CD8-positive, alpha-beta T cell (primary cell): ENCODE measurements at regions of chr19 and their contacts with region 1.

Region 1: GRCh38 chr19:41563854-41564514 is 12.0 kb upstream of the CEACAM21 start:
- DNase-seq: peak in 6 of 9 experiments; percentile 42 to 84 (median 67)
- ATAC-seq: peak; percentile 64
- H3K4me3 ChIP-seq: peak overlapping the region; percentile 29 to 68
- H3K4me3 Mint-ChIP-seq: peak overlapping the region; percentile 71
- H3K27ac ChIP-seq: peak overlapping the region; percentile 34 to 51
- H3K27ac Mint-ChIP-seq: peak overlapping the region; percentile 60
- H3K4me1 ChIP-seq: peaks cover 68% of the 10 kb centered on the region
- H3K4me1 Mint-ChIP-seq: peaks cover 58% of the 10 kb centered on the region
- H3K27me3 ChIP-seq: no peaks in the 10 kb centered on the region
- H3K27me3 Mint-ChIP-seq: peaks cover 26% of the 10 kb centered on the region
- CTCF ChIP-seq: no peak

Region 2: DNA sequence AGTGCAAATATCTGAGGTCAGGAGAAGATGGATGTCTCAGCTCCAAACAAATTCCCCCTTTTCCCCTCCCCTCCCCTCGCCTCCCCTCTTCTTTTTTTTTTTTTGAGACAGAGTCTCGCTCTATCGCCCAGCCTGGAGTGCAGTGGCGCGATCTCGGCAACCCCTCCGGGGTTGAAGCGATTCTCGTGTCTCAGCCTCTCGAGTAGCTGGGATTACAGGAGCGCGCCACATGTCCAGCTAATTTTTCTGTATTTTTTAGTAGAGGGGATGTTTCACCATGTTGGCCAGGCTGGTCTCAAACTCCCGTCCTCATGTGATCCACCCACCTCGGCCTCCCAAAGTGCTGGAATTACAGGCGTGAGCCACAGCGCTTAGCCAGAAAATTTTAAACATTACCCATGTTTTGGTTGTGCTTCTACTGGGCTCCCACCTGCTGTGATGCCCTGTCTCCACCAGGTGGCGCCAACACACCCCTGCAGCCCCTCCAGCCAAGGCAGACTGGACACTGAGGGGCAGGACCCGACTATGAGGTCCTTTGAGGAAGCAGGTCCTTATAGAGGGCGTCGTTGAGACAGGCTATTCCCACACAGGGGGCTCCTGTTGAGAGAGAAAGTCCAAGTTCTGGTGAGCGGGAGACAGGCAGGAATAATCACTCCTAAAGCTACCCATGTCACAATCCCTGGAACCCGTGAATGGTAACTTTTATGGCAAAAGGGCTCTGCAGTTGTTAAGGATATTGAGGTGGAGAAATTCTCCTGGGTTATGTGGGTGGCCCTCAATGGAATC is 114.7 kb before region 1 on chr19:
- CTCF ChIA-PET with region 1: interaction called, 122 read pairs
- POLR2A ChIA-PET with region 1: no interaction called
- intact Hi-C with region 1: no loop called
- DNase-seq: peak; percentile 49 to 86 (median 71)
- ATAC-seq: peak; percentile 87
- H3K4me3 ChIP-seq: peak overlapping the region; percentile 23 to 37
- H3K4me3 Mint-ChIP-seq: peak overlapping the region; percentile 73
- H3K27ac ChIP-seq: no peak overlapping the region
- H3K27ac Mint-ChIP-seq: no peak overlapping the region
- H3K4me1 ChIP-seq: peaks cover 5% of the 10 kb centered on the region
- H3K4me1 Mint-ChIP-seq: peaks cover 5% of the 10 kb centered on the region
- H3K27me3 ChIP-seq: peaks cover 0 to 8% of the 10 kb centered on the region in 2 experiments
- H3K27me3 Mint-ChIP-seq: peaks cover 13% of the 10 kb centered on the region
- CTCF ChIP-seq: peak; percentile 99

Region 3: DNA sequence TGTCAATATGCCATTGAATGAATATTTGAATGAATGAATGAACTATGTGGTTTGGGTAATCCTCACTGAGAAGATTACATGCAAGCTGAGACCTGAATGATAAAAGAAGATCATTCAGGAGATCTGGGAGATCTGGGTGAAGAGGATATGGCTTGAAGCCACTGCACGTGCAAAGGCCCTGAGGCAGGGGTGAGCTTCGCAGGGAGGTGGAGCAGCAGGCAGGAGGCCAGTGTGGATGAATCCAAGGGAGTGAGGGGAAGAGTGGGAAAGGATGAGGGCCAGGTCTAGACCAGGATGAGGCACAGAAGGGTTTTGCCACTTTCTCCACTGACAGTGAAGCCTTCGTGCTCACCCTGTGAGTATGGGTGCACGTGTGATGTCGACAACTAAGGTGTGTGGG is 71.1 kb before region 1 on chr19:
- CTCF ChIA-PET with region 1: no interaction called
- POLR2A ChIA-PET with region 1: no interaction called
- intact Hi-C with region 1: no loop called
- DNase-seq: no peak
- ATAC-seq: no peak
- H3K4me3 ChIP-seq: no peak overlapping the region
- H3K4me3 Mint-ChIP-seq: no peak overlapping the region
- H3K27ac ChIP-seq: no peak overlapping the region
- H3K27ac Mint-ChIP-seq: no peak overlapping the region
- H3K4me1 ChIP-seq: no peaks in the 10 kb centered on the region
- H3K4me1 Mint-ChIP-seq: no peaks in the 10 kb centered on the region
- H3K27me3 ChIP-seq: no peaks in the 10 kb centered on the region
- H3K27me3 Mint-ChIP-seq: peaks cover 2% of the 10 kb centered on the region
- CTCF ChIP-seq: no peak

Region 4: DNA sequence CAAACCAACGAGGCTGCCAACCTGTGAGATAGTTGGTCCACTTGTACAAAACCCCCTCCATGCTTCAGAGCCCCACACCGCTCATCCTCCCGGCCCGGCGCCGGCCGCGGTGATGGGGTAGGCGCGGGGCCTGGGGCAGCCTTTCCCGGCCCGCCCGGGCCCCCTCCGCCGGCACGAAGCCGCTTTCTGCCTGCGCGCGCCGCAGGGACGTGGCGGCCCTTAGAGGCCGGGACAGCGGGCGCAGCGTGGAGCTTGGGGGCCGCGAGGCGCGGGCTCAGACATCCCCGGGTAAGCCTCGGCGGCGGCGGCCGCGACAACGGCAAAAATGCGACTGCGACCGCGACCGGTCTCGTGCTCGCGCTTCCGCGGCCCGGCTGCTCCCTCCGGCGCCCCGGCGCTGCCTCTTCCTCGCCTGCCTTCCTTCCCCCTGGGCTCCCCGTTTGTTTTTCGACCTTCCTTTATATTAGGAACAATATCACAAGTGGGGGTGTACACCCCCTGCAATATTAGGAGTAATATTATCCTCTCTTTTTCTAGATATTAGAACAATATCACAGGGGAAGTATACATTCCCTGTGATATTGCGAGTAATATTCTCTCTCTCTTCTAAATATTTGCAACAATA is 41.9 kb before region 1 on chr19:
- CTCF ChIA-PET with region 1: no interaction called
- POLR2A ChIA-PET with region 1: no interaction called
- intact Hi-C with region 1: loop called in 1 of 2 experiments (anchors 5 kb)
- DNase-seq: peak in 8 of 9 experiments; percentile 24 to 76 (median 53)
- ATAC-seq: peak; percentile 71
- H3K4me3 ChIP-seq: peak overlapping the region; percentile 39 to 43
- H3K4me3 Mint-ChIP-seq: peak overlapping the region; percentile 85
- H3K27ac ChIP-seq: peak overlapping the region; percentile 49 to 62
- H3K27ac Mint-ChIP-seq: peak overlapping the region; percentile 64
- H3K4me1 ChIP-seq: peaks cover 10% of the 10 kb centered on the region
- H3K4me1 Mint-ChIP-seq: peaks cover 19% of the 10 kb centered on the region
- H3K27me3 ChIP-seq: no peaks in the 10 kb centered on the region
- H3K27me3 Mint-ChIP-seq: peaks cover 52% of the 10 kb centered on the region
- CTCF ChIP-seq: no peak

Region 5: DNA sequence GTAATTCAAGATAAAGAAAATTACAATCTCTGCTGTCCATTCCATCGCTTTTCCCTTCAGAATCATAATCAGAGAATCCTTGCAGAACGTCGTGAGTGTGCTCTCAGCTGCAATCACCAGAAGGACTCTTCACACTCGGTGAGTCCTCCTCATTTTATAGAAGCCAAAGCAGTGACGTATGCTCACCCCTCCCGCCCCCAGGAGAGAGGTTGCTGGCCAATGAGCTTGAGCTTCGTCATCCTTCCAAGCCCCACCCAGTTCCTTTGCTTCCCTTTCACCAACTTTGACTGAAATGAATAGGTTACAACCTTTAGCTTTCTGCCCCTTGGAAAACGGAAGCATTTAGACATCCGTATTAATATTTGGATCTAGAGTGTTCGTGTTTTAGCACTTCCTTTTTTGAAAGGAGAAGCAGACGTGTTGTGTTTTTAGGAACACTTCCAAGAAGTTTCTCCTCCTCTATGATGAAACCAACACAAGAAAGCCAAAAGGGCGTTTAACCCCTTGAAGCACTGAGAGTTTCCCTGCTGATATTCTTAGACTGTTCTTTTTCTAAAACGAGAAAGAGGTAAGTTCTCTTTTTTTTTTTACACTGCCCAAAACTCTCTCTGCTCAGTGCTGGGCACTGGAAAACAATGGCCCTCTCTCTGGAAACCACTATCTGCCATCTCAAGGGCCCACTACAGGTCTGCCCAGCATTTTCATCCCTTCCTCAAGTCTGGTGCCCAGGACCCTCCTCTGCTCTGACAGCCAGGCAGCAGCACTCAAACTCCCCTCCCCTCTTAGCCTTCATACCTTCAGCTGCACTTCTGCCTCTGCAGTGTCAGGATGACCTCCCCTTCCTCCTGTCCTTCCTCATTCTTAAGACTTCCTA is 32.3 kb before region 1 on chr19:
- CTCF ChIA-PET with region 1: interaction called, 10 read pairs
- POLR2A ChIA-PET with region 1: interaction called, 7 read pairs
- intact Hi-C with region 1: loop called in 1 of 2 experiments (anchors 5 kb)
- DNase-seq: peak; percentile 45 to 92 (median 80)
- ATAC-seq: peak; percentile 95
- H3K4me3 ChIP-seq: peak overlapping the region; percentile 23 to 40
- H3K4me3 Mint-ChIP-seq: peak overlapping the region; percentile 72
- H3K27ac ChIP-seq: peak overlapping the region; percentile 43 to 61
- H3K27ac Mint-ChIP-seq: peak overlapping the region; percentile 86
- H3K4me1 ChIP-seq: peaks cover 47% of the 10 kb centered on the region
- H3K4me1 Mint-ChIP-seq: peaks cover 48% of the 10 kb centered on the region
- H3K27me3 ChIP-seq: no peaks in the 10 kb centered on the region
- H3K27me3 Mint-ChIP-seq: peaks cover 26% of the 10 kb centered on the region
- CTCF ChIP-seq: no peak

Region 6: DNA sequence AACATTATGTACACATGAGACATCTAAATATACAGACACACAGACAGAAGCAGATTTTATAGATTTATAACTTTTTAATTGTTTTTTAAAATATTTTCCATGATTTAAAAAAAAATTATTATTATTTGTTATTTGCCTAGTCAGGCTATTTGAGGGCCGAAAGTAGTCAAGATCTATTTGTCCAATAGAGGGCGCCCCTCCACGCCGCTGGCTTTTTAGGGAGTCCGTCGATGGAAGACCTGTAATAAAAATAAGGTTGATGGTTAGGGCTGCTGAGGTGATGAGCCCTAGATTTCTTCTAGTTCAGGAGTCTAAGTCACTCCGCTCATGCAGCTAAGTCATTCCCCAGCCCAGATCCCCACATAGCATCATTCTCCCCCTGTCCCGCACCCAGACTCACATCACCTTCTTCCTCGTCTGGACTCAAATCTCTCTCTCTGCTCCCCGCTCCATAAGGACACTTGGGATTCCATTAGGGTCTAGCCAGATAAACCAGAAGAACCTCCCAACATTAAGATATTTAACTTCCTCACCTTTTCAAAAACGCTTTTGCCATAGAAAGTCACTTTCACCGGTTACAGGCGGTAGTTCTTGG is 21.9 kb before region 1 on chr19:
- CTCF ChIA-PET with region 1: interaction called, 35 read pairs
- POLR2A ChIA-PET with region 1: interaction called, 7 read pairs
- intact Hi-C with region 1: loop called (anchors 1 kb)
- DNase-seq: peak; percentile 55 to 89 (median 83)
- ATAC-seq: no peak
- H3K4me3 ChIP-seq: no peak overlapping the region
- H3K4me3 Mint-ChIP-seq: no peak overlapping the region
- H3K27ac ChIP-seq: no peak overlapping the region
- H3K27ac Mint-ChIP-seq: no peak overlapping the region
- H3K4me1 ChIP-seq: peaks cover 46% of the 10 kb centered on the region
- H3K4me1 Mint-ChIP-seq: peaks cover 43% of the 10 kb centered on the region
- H3K27me3 ChIP-seq: no peaks in the 10 kb centered on the region
- H3K27me3 Mint-ChIP-seq: peaks cover 4% of the 10 kb centered on the region
- CTCF ChIP-seq: peak; percentile 73

Region 7: GRCh38 chr19:41548954-41549688 is 14.9 kb before region 1 on chr19:
- CTCF ChIA-PET with region 1: interaction called, 33 read pairs
- POLR2A ChIA-PET with region 1: interaction called, 15 read pairs
- intact Hi-C with region 1: loop called in 1 of 2 experiments (anchors 1 kb)
- DNase-seq: peak; percentile 40 to 88 (median 80)
- ATAC-seq: peak; percentile 62
- H3K4me3 ChIP-seq: peak overlapping the region; percentile 64 to 67
- H3K4me3 Mint-ChIP-seq: peak overlapping the region; percentile 94
- H3K27ac ChIP-seq: peak overlapping the region; percentile 69 to 72
- H3K27ac Mint-ChIP-seq: peak overlapping the region; percentile 92
- H3K4me1 ChIP-seq: peaks cover 57% of the 10 kb centered on the region
- H3K4me1 Mint-ChIP-seq: peaks cover 56% of the 10 kb centered on the region
- H3K27me3 ChIP-seq: no peaks in the 10 kb centered on the region
- H3K27me3 Mint-ChIP-seq: peaks cover 2% of the 10 kb centered on the region
- CTCF ChIP-seq: no peak

Region 8: DNA sequence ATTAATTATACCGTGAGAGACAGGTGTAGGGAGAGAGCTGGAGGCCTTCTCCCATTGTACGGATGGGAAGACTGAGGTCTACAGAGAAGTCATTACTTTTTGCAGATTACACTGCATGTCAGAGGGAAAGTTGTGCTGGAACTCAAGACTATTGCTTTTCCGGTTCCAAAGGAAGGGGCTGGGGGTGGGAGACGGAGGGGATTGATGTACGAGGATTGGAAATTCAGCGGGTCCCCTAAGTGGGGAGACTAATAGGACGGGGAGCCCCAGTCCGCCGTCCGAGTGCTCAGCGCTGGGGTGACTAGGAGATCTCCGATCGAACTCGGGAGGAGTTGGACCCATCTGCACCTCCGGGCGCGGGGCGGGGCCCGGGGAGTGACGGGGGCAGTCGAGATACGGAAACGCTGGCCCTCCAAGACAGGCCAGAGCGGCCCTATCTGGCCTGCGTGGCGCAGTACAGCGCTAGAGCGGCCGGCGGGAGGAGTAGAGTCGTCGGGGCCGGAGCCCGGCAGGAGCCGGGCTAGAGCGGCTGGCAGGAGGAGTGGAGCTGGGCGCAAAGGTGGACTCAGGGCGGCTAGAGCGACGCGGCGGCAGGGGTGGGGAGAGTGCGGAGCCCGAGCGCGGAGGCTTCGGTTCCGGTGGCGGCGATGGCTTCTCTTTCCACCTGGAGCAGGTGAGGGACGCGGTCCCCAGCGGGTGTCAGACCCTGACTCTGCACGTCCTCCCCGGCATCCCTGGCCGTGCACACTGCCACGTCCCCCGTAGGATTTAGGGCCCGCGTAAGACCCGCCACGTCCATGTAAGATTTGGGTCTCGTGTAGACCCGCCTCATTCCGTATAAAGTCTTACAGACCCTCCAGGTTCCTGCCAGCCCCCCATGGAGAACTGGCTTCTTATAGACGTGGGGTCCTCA is 320.1 kb after region 1 on chr19:
- CTCF ChIA-PET with region 1: no interaction called
- POLR2A ChIA-PET with region 1: no interaction called
- intact Hi-C with region 1: no loop called
- DNase-seq: peak; percentile 78 to 96 (median 90)
- ATAC-seq: peak; percentile 41
- H3K4me3 ChIP-seq: peak overlapping the region; percentile 97 to 99
- H3K4me3 Mint-ChIP-seq: peak overlapping the region; percentile 93
- H3K27ac ChIP-seq: peak overlapping the region; percentile 78 to 90
- H3K27ac Mint-ChIP-seq: peak overlapping the region; percentile 99
- H3K4me1 ChIP-seq: peaks cover 50% of the 10 kb centered on the region
- H3K4me1 Mint-ChIP-seq: peaks cover 68% of the 10 kb centered on the region
- H3K27me3 ChIP-seq: no peaks in the 10 kb centered on the region
- H3K27me3 Mint-ChIP-seq: no peaks in the 10 kb centered on the region
- CTCF ChIP-seq: no peak